ENCODE measurements at regions of chr16 and their contacts with region 1.

Region 1: GRCh38 chr16:31868691-31869167 is 4.9 kb upstream of the ZNF267 start:
- DNase-seq: peak; percentile 74
- H3K4me3 Mint-ChIP-seq: peak overlapping the region; percentile 72
- H3K27ac Mint-ChIP-seq: peak overlapping the region; percentile 93
- H3K4me1 Mint-ChIP-seq: peaks cover 77% of the 10 kb centered on the region
- H3K27me3 Mint-ChIP-seq: peaks cover 3% of the 10 kb centered on the region

Region 2: GRCh38 chr16:30984669-30985400 is 883.9 kb before region 1 on chr16 and contains the start of gene HSD3B7:
- intact Hi-C with region 1: loop called (anchors 1 kb)
- DNase-seq: peak; percentile 73
- H3K4me3 Mint-ChIP-seq: peak within 1 kb of the TSS; percentile 7
- H3K27ac Mint-ChIP-seq: no peak within 1 kb of the TSS
- H3K4me1 Mint-ChIP-seq: no peaks in the 10 kb centered on the region
- H3K27me3 Mint-ChIP-seq: no peaks in the 10 kb centered on the region
- total RNA-seq, gene HSD3B7: 2.1 and 3.3 TPM in 2 replicates

Region 3: GRCh38 chr16:31073968-31074813 is 794.5 kb before region 1 on chr16 and contains the starts of genes ZNF646 and ZNF668:
- intact Hi-C with region 1: loop called (anchors 1 kb)
- DNase-seq: peak; percentile 98
- H3K4me3 Mint-ChIP-seq: peak within 1 kb of the TSS; percentile 99
- H3K27ac Mint-ChIP-seq: peak within 1 kb of the TSS; percentile 96
- H3K4me1 Mint-ChIP-seq: peaks cover 35% of the 10 kb centered on the region
- H3K27me3 Mint-ChIP-seq: no peaks in the 10 kb centered on the region
- total RNA-seq, gene ZNF646: 25.3 and 26.1 TPM in 2 replicates
- total RNA-seq, gene ZNF668: 14.9 and 15.1 TPM in 2 replicates

Region 4: GRCh38 chr16:31202414-31203375 is 666.0 kb before region 1 on chr16 and contains the start of gene PYCARD:
- intact Hi-C with region 1: loop called (anchors 5 kb)
- DNase-seq: no peak
- H3K4me3 Mint-ChIP-seq: peak within 1 kb of the TSS; percentile 85
- H3K27ac Mint-ChIP-seq: peak within 1 kb of the TSS; percentile 80
- H3K4me1 Mint-ChIP-seq: peaks cover 55% of the 10 kb centered on the region
- H3K27me3 Mint-ChIP-seq: peaks cover 5% of the 10 kb centered on the region
- total RNA-seq, gene PYCARD: 20.9 and 21.2 TPM in 2 replicates

Region 5: DNA sequence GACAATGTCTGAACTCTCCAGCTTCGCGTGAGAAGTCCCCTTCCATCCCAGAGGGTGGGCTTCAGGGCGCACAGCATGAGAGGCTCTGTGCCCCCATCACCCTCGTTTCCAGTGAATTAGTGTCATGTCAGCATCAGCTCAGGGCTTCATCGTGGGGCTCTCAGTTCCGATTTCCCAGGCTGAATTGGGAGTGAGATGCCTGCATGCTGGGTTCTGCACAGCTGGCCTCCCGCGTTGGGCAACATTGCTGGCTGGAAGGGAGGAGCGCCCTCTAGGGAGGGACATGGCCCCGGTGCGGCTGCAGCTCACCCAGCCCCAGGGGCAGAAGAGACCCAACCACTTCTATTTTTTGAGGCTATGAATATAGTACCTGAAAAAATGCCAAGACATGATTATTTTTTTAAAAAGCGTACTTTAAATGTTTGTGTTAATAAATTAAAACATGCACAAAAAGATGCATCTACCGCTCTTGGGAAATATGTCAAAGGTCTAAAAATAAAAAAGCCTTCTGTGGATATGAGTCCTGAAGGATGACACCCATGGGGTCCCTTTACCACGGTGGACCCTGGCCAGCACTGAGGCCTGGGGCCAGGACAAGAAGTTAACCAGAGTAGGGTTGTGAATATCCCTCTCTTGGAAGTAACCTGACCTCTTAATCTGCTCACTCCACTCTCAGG is 486.1 kb before region 1 on chr16:
- intact Hi-C with region 1: loop called (anchors 1 kb)
- DNase-seq: peak; percentile 60
- H3K4me3 Mint-ChIP-seq: no peak overlapping the region
- H3K27ac Mint-ChIP-seq: no peak overlapping the region
- H3K4me1 Mint-ChIP-seq: peaks cover 31% of the 10 kb centered on the region
- H3K27me3 Mint-ChIP-seq: peaks cover 3% of the 10 kb centered on the region

Region 6: DNA sequence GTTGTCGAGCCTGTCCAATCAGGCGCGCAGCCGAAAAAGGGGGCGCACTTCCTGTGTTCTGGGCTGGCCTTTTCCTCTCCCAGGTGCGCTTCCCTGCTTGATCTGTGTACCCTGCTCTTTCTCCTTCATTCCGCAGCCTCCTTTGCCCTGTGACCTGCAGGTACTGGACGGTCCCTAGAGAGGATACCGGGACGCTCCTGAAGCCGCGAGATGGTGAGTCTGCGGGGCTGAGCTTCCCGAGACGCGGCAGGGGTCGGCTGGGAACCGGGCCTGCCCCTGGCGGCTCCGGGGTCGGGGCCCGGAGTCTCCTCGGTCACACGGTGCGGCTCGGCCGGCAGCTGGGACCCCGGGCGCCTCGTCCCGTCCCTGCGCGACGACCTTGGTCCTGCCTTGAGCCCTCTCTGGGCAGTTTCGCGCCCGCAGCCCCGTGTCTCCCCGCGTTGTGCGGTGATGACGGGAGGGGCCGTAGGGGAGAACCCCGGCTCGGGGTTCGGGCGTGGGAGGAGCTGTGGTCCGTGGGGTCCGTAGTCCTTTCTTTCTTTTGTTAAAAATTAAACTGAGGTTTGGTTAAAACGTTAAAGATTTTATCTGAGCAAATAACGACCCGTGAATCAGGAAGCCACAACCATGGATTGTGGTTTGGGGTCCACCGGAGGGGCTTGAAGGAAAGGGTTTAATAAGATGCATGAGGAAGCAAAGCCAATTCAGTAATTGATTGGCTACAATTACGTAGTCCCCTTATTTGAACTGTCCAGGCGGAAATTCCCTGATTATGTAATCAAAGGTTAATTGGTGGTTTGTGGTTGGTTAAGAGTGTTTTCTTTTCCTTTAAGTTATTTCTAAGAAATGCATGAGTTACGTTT is 168.0 kb before region 1 on chr16:
- intact Hi-C with region 1: loop called (anchors 1 kb)
- DNase-seq: peak; percentile 72
- H3K4me3 Mint-ChIP-seq: peak overlapping the region; percentile 91
- H3K27ac Mint-ChIP-seq: peak overlapping the region; percentile 89
- H3K4me1 Mint-ChIP-seq: peaks cover 28% of the 10 kb centered on the region
- H3K27me3 Mint-ChIP-seq: no peaks in the 10 kb centered on the region

Region 7: DNA sequence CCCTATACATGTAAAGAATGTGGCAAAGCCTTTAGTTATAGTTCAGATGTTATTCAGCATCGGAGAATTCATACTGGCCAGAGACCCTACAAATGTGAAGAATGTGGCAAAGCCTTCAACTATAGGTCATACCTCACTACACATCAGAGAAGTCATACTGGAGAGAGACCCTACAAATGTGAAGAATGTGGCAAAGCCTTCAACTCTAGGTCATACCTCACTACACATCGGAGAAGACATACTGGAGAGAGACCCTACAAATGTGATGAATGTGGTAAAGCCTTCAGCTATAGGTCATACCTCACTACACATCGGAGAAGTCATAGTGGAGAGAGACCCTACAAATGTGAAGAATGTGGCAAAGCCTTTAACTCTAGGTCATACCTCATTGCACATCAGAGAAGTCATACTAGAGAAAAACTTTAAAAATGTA is 47.3 kb after region 1 on chr16:
- intact Hi-C with region 1: no loop called
- DNase-seq: no peak
- H3K4me3 Mint-ChIP-seq: no peak overlapping the region
- H3K27ac Mint-ChIP-seq: peak overlapping the region; percentile 68
- H3K4me1 Mint-ChIP-seq: peaks cover 13% of the 10 kb centered on the region
- H3K27me3 Mint-ChIP-seq: no peaks in the 10 kb centered on the region